ENCODE measurements at regions of chr14 and their contacts with region 1.

Region 1: DNA sequence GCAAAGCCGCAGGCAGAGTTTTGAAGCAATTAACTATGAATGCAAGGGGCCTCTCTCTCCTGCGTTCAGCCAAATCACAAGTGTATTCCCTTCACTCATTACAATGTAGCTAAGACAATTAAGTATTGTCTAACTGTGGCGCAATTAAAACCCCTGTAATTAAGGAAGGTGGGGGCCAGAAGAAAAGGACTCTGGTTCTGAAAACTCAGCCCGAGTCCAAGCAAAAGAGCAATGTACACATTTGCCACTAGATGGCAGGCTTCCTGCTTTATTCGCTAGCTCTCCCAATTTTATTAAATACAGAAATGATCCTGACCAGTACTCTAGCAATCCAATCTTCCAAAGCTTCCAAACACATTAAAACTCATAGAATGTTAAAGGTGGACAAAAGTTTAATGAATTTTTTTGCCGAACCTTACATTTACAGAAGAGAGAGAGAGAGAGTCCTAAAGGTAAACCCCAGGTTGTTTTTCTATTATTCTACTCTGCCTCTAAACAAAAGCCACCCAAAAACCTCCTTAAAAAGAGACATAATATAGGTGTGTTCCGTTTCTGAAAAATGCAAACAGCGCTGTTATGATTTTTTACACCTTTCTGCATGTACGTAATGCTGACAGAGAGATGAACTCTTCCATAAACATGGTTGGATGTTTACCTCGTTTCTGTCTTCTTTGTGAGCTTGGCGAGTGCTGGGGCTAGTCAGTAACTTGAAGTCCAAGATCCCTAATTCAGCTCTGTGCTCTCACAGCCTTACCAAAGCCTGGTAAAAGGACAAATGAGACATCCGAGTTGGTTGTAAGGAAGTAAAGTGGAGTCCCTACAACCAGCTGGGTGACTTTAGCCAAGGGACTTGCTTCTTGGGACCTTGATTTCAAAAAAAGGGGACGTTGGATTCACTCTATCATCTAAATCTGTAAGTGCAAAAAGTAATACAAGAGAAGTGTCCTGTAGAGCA is 50.9 kb upstream of the VASH1 start:
- DNase-seq: no peak
- H3K4me3 ChIP-seq: no peak overlapping the region
- CTCF ChIP-seq: peak; percentile 64

Region 2: DNA sequence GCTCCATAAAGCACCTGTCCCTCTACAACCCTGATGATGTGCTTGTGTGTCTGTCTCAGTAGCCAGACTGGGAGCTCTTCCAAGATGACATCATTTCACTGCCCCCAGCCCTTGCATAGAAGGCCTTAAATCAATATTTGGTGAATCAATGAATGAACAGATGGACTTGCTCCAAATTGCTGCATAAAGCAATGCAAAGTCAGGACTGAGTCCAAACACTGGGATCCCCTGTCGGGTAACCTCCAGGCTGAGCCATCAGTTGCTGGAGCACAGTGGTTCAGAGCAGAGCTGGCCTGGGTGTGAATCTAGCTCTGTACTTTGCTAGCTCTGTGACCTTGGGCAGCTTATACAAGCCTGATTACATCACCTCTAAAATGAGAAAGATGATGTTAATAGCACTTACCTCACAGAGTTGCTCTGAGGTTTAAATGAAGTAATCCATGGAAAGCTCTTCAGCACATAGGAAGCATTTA is 69.4 kb before region 1 on chr14:
- CTCF ChIA-PET with region 1: no interaction called
- POLR2A ChIA-PET with region 1: no interaction called
- DNase-seq: no peak
- H3K4me3 ChIP-seq: no peak overlapping the region
- CTCF ChIP-seq: no peak

Region 3: GRCh38 chr14:76694106-76694505 is 16.2 kb before region 1 on chr14:
- CTCF ChIA-PET with region 1: interaction called, 31 read pairs
- POLR2A ChIA-PET with region 1: no interaction called
- DNase-seq: no peak
- H3K4me3 ChIP-seq: no peak overlapping the region
- CTCF ChIP-seq: no peak

Region 4: GRCh38 chr14:76720382-76720813 is 10.1 kb after region 1 on chr14:
- CTCF ChIA-PET with region 1: interaction called, 35 read pairs
- POLR2A ChIA-PET with region 1: no interaction called
- DNase-seq: no peak
- H3K4me3 ChIP-seq: no peak overlapping the region
- CTCF ChIP-seq: no peak

Region 5: DNA sequence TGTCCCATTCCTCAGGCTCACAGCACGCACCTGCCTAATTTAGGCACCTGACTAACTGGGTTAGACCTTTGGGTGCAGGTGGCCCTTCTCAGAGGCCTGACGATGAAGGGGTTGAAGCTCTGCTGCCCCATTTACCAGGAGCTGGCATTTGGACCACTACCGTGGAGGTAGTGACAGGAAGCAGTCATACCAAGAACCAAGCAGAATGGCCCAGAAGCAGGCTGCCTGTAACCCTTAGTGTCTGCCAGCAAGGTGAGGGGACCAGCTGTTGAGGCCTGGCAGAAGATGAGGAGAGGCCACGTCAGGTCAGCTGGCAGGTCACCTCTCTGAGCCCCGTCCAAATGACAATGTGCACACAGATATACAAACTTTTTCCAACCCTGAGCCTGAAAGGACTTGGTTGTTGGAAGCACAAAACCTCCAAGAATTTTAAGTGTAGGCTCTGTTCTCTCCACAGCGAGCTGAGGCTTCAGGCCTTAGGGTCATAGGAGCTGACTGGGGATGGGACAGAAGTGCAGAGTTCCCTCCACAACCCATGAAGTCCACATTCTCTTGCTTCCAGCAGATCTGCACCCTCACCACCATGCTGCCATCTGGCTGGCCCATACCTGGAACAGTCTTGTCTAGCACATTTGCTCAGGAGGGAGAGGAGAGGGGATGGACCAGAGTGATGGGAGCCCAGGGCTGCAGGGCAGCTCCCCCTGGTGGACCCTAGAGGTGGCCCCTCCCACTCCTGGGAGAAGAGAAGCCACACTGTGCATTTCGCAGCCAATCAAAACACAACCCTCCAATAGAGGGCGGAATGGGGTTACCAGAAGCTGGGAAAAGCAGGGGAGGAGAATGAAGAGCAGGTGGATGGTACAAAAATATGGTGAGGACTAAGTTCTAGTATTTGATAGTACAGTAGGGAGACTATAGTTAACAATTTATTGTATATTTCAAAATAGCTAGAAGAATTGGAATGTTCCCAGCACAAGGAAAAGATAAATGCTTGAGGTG is 74.2 kb after region 1 on chr14:
- CTCF ChIA-PET with region 1: interaction called, 77 read pairs
- POLR2A ChIA-PET with region 1: no interaction called
- DNase-seq: no peak
- H3K4me3 ChIP-seq: no peak overlapping the region
- CTCF ChIP-seq: peak; percentile 95

Region 6: DNA sequence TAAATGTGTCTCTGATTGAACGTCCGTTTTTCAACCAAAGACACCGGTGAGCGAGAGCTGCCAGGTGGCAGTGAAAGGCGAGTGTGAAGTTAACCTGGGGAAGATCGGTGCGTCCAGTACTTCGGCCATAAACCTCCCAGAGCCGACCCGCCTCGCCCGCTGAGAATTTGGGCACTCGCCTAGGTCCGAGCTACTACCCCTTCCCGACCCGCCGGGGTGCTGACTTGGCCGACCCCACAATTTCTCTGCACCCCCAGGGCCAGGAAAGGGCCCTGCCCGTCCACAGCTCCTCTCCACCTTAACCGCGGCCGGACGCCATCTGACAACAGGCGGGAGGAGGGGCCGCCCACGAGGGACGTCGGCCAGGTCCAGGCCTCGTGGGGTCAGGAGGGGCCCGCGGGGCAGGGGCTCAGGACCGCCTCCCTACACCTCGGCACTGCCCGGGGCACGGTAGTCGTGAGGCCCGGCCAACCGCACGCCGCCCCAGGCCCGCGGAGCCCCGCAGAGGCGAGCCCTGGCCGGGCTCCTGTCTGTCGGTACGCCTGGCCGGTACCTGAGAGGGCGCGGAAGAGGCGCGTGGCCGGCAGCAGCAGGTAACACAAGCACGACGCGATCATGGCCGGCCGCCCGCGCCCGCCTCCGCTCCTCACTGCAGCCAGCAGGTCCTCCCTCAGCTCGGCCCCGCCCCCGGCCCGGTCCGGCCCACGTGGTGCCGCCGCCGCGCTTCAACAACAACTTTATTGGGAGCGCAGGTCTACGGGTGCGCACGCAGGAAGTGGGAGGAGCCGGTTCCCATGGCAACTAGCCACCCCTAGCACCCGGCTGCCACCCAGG is 102.1 kb after region 1 on chr14 and contains the start of gene ANGEL1:
- CTCF ChIA-PET with region 1: interaction called, 96 read pairs
- POLR2A ChIA-PET with region 1: interaction called, 4 read pairs
- DNase-seq: no peak
- H3K4me3 ChIP-seq: peak within 1 kb of the TSS; percentile 75
- CTCF ChIP-seq: no peak

Region 7: DNA sequence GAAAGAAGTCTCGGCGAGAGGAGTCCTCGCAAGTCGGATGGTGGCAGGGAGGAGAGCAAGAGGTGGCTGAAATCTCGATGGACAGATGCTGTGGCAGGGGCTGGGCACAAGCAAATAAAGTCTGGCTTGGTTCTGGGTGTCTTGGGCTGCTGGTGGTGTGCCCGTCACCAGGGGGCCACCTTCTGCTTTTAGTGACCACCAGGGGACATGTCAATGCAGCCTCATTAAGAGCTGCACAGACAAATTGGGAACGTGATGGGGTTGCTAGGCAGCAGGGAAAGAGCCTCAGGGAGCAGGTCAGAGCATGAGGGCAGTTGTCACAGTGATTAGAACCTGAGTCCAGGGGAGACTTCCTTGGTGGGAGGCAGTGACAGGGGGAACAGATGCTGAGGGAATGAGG is 159.8 kb after region 1 on chr14:
- CTCF ChIA-PET with region 1: interaction called, 10 read pairs
- POLR2A ChIA-PET with region 1: no interaction called
- DNase-seq: no peak
- H3K4me3 ChIP-seq: no peak overlapping the region
- CTCF ChIP-seq: peak; percentile 33

Region 8: DNA sequence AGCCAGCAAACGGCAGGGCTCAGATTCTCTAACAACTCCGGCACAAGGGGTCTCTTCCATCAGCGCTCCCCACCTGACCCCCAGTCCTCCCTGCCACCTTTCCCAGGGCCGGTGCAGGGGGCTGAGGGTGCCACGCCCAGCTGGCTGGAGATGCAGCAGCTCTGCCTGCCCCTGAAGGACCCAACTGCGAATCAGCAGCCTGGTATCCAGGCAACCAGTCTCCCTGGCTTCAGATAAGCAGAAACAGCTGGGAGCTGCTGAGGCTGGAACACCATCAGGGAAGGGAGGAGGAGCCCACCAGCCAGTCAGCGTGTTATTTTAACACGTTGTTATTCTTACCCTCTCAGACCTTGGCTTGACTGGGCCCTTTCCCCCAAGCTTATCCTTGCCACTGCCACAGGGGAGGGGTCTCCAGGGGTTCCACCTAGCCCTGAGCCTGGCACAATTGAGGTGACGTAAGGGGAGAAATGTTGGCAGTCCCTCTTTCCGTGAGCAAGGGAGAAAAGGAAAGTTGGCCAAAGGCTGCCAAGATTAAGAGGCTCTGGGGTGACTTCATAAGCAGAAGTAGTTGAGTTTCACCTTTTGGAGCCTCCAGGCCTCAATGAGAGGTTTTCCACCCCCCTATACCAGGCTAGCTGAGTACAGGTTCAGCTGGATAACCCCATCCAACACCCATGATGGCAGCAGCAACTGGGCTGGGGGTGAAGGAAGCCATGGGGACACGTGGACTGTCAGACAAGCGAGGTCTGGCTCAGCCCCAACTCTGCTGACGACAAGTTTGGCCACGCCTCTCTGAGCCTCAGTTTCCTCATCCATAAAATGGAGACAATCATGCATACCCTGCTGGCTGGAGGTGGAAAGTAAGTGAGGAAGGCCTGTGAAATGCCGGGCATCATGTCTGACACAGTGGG is 227.1 kb after region 1 on chr14:
- CTCF ChIA-PET with region 1: no interaction called
- POLR2A ChIA-PET with region 1: no interaction called
- DNase-seq: no peak
- H3K4me3 ChIP-seq: no peak overlapping the region
- CTCF ChIP-seq: no peak

Measured in AG04449 (cell line).